ENCODE measurements at regions of chr14 and their contacts with region 1.

Region 1: GRCh38 chr14:32576088-32576795 is 247.1 kb downstream of the AKAP6 start:
- DNase-seq: no peak
- H3K4me3 ChIP-seq: no peak overlapping the region
- H3K27ac ChIP-seq: no peak overlapping the region
- H3K27me3 ChIP-seq: peaks cover 5% of the 10 kb centered on the region
- CTCF ChIP-seq: peak; percentile 98

Region 2: GRCh38 chr14:32350020-32350419 is 226.2 kb before region 1 on chr14:
- CTCF ChIA-PET with region 1: no interaction called
- POLR2A ChIA-PET with region 1: no interaction called
- DNase-seq: no peak
- H3K4me3 ChIP-seq: no peak overlapping the region
- H3K27ac ChIP-seq: no peak overlapping the region
- H3K27me3 ChIP-seq: no peaks in the 10 kb centered on the region
- CTCF ChIP-seq: no peak

Region 3: DNA sequence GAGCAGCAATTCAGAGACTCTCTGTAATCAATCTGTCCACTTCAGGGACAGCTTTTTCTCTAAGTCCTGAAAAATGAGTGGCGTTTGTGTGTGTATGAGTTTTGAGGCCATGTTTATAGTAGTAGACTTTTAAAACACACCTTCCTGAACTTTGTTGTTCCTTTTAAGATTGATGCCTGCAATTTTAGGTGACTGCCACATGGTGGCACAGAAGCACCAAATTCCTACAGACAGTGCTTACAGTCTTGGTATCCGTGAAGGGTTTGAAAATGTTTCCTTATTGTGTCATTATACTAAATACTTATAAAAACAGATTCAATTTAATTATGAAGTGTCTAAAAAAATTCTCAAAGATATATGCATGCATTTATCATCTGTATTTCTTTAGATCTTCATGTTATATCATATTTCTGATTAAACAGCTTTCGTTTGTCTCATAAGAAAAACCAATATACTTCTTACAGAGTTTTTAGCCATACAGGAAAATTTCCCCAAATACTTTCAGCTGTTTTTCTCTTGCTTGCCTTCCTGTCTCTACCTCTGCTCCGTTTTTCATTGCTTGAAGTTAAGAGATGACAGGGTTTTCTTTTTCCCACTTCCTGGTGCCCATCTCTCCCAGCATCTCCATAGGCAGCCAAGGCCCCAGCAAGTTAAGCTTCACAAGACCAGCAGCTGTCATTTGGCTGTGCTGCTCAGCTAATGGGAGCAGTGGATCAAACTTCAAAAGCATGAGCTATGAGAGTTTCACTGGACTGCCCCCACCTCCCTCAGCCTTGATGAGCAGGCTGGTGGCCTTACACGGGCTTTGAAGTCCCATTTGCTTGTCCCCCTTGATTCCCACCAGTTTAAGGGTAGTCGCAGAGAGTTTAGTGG is 12.4 kb after region 1 on chr14:
- CTCF ChIA-PET with region 1: interaction called, 36 read pairs
- POLR2A ChIA-PET with region 1: no interaction called
- DNase-seq: no peak
- H3K4me3 ChIP-seq: no peak overlapping the region
- H3K27ac ChIP-seq: no peak overlapping the region
- H3K27me3 ChIP-seq: peaks cover 3% of the 10 kb centered on the region
- CTCF ChIP-seq: peak; percentile 90

Region 4: DNA sequence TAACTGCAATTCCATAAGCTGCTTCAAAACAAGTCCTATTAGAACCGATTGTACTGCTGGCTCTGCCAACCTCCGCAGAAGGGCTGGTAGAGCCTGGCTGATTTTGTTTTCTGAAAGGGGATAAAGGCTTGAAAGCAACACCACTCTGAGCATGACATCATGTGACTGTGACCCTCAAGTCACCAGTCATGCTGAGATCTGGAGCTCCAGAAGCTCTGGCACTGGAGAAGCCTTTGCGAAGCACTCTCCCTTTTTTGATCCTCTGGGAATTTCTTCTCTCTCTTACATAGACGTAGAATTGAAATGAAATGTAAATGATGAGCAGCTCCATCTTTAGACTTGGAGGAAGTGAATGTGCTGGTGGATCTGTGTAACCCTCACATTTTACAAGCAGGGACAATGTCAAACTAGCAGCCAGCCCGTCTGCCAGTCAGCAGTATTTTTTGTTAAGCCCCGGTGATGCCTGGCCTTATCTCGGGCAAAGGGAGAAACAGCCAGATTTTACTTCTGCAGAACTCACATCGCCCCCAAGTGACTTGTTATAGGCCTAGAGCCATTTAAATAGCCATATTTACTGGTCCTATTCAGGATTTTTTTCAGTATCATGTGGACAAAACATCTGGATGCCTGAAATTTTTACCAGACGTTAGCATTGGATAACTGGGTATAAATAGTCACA is 250.3 kb after region 1 on chr14:
- CTCF ChIA-PET with region 1: interaction called, 10 read pairs
- POLR2A ChIA-PET with region 1: no interaction called
- DNase-seq: no peak
- H3K4me3 ChIP-seq: no peak overlapping the region
- H3K27ac ChIP-seq: no peak overlapping the region
- H3K27me3 ChIP-seq: no peaks in the 10 kb centered on the region
- CTCF ChIP-seq: peak; percentile 22; the same call in 1 of the 2 replicates

Measured in AG04450 (cell line).